ENCODE measurements at regions of chrX and their contacts with region 1.

Region 1: GRCh38 chrX:71254092-71254941 is at the start of gene ZMYM3:
- DNase-seq: peak; percentile 92
- H3K4me3 ChIP-seq: peak within 1 kb of the TSS; percentile 84
- H3K27ac ChIP-seq: peak within 1 kb of the TSS; percentile 83
- H3K4me1 ChIP-seq: peaks cover 14% of the 10 kb centered on the region
- H3K27me3 ChIP-seq: no peaks in the 10 kb centered on the region
- CTCF ChIP-seq: no peak
- total RNA-seq, gene ZMYM3: 47.6 and 52.7 TPM in 2 replicates

Region 2: DNA sequence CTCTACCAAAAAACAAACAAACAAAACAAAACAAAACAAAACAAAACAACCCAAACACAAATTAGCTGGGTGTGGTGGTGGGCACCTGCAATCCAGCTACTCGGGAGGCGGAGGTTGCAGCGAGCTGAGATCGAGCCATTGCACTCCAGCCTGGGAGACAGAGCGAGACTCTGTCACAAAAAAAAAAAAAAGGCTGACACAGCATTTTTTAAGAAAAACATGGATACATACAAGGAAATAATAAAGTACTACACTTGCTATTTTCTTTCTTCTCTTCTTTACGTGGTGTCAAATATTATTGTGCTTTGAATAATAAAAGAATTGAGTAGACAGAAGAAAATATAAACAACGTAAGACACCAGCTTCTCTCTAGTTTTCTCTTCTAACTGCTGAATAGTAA is 419.7 kb before region 1 on chrX:
- CTCF ChIA-PET with region 1: no interaction called
- POLR2A ChIA-PET with region 1: no interaction called
- intact Hi-C with region 1: no loop called
- DNase-seq: no peak
- H3K4me3 ChIP-seq: no peak overlapping the region
- H3K27ac ChIP-seq: no peak overlapping the region
- H3K4me1 ChIP-seq: no peaks in the 10 kb centered on the region
- H3K27me3 ChIP-seq: no peaks in the 10 kb centered on the region
- CTCF ChIP-seq: no peak

Region 3: DNA sequence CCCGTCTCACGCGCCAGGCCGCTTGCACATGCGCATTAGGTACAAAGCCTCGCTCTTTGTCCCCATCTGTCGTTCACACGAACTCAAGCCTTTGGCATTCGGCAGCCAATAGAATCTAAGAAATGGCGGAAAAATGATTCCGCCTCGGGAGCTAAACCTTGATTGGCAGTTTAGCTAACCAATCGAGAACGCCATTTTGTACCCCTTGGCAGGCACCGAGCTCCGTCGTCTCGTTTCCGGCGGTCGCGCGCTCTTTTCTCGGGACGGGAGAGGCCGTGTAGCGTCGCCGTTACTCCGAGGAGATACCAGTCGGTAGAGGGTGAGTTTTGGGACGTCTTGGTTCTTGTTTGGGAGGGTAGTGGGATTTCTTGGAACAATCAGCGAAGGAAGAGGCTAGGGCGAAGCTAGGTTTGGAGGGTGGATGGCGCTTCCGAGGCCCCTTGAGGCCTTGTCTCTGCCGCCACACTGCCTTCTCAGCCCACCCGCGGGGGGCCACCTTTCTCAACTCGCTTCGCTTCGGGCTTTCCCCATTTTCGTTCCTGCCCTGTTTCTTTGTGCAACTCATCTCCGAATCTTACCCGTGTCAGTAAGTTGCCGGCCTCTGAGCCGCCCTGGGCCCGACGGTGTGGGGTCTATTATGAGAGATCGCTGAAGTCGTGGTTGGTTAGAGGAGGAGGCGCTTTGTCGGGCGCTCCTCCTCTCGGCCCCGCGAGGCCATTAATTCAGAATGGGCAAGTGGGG is 29.3 kb after region 1 on chrX and contains the start of gene NONO:
- CTCF ChIA-PET with region 1: interaction called, 6 read pairs
- POLR2A ChIA-PET with region 1: no interaction called
- intact Hi-C with region 1: loop called (anchors 1 kb)
- DNase-seq: peak; percentile 98
- H3K4me3 ChIP-seq: peak within 1 kb of the TSS; percentile 72
- H3K27ac ChIP-seq: peak within 1 kb of the TSS; percentile 98
- H3K4me1 ChIP-seq: peaks cover 4% of the 10 kb centered on the region
- H3K27me3 ChIP-seq: no peaks in the 10 kb centered on the region
- CTCF ChIP-seq: 0 out of 2 replicates have a peak, but pooled peaks have one; percentile 18
- total RNA-seq, gene NONO: 705 and 792 TPM in 2 replicates

Region 4: GRCh38 chrX:71365876-71366673 is 111.8 kb after region 1 on chrX and contains the start of gene TAF1:
- CTCF ChIA-PET with region 1: no interaction called
- POLR2A ChIA-PET with region 1: interaction called, 3 read pairs
- intact Hi-C with region 1: loop called (anchors 5 kb)
- DNase-seq: peak; percentile 97
- H3K4me3 ChIP-seq: peak within 1 kb of the TSS; percentile 69
- H3K27ac ChIP-seq: peak within 1 kb of the TSS; percentile 87
- H3K4me1 ChIP-seq: peaks cover 5% of the 10 kb centered on the region
- H3K27me3 ChIP-seq: no peaks in the 10 kb centered on the region
- CTCF ChIP-seq: no peak
- total RNA-seq, gene TAF1: 30.3 and 38.5 TPM in 2 replicates

Region 5: DNA sequence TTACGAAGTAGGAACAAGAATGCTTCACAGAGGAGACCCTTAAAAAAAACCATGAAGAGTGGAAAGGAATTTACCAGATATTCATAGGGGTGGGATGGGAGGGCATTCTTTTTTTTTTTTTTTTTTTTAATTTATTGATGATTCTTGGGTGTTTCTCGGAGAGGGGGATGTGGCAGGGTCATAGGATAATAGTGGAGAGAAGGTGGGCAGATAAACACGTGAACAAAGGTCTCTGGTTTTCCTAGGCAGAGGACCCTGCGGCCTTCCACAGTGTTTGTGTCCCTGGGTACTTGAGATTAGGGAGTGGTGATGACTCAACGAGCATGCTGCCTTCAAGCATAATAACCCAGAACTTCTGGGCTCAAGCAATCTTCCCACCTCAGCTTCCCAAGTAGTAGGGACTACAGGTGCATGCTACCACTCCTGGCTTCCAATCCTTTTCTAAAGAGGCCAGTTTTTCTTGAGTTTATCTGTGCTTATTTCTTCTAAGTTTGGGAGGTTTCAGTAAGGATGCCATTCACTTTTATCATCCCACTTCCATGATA is 212.7 kb after region 1 on chrX:
- CTCF ChIA-PET with region 1: no interaction called
- POLR2A ChIA-PET with region 1: no interaction called
- intact Hi-C with region 1: no loop called
- DNase-seq: no peak
- H3K4me3 ChIP-seq: no peak overlapping the region
- H3K27ac ChIP-seq: no peak overlapping the region
- H3K4me1 ChIP-seq: no peaks in the 10 kb centered on the region
- H3K27me3 ChIP-seq: no peaks in the 10 kb centered on the region
- CTCF ChIP-seq: no peak